ENCODE measurements at regions of chr7 and their contacts with region 1.

Region 1: DNA sequence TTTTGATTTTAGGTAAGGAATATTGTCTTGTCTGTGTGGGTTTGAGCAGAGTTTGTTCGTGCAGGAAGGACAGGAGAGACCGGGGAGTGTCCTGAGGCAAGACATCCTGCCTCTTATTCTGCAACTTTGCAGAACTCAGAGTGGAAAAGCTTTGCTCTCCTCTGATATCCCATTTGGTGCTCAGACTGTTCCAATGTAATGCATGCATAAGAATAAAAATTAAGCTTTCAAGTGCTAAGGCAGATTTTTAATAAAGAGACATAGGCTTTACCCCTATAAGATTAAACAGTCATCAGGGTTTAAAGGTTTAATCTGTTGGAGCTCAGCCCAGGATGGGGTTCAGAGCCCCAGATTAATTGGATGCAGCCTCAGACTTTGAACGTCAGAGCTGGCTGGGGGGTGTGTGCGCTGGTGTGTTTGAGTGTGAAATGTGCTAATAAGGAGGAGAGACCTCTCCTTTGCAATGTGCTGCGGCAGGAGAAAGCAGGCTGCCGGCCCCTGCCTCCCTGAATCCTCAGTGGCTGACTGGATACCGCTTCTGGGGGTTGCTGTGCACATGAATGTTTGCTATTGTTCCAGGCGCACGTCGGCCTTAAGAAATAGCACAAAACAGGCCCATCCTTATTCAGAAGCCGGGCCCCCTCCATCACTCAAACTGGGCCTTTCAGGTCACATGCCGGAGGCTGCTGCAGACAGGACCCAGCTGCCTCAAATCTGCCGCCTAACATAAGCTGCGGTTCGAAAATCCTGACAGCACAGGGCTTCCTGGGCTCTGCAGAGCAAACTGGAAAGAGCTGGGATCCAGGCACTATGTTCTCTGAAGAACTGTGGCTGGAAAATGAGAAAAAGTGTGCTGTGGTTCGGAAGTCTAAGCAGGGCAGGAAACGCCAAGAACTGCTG is 84.1 kb upstream of the PRR15 start:
- DNase-seq: peak; percentile 83
- H3K4me3 ChIP-seq: peak overlapping the region in 3 of 4 donors; percentile 23 to 45 (median 26)
- H3K27ac ChIP-seq: peak overlapping the region; percentile 72 to 91 (median 78)
- H3K4me1 ChIP-seq: peaks cover 0 to 53% (median 43%) of the 10 kb centered on the region in 4 donors
- H3K27me3 ChIP-seq: no peaks in the 10 kb centered on the region
- CTCF ChIP-seq: no peak
- EP300 ChIP-seq: no peak
- POLR2A ChIP-seq: no peak

Region 2: GRCh38 chr7:29564496-29565223 is 85.1 kb after region 1 on chr7:
- intact Hi-C with region 1: loop called (anchors 5 kb)
- DNase-seq: peak; percentile 73
- H3K4me3 ChIP-seq: peak overlapping the region; percentile 33 to 59 (median 50)
- H3K27ac ChIP-seq: peak overlapping the region; percentile 4 to 35 (median 32)
- H3K4me1 ChIP-seq: peaks cover 0 to 40% (median 35%) of the 10 kb centered on the region in 4 donors
- H3K27me3 ChIP-seq: peaks cover 5 to 68% (median 52%) of the 10 kb centered on the region in 3 donors
- CTCF ChIP-seq: no peak
- EP300 ChIP-seq: no peak
- POLR2A ChIP-seq: no peak

Region 3: DNA sequence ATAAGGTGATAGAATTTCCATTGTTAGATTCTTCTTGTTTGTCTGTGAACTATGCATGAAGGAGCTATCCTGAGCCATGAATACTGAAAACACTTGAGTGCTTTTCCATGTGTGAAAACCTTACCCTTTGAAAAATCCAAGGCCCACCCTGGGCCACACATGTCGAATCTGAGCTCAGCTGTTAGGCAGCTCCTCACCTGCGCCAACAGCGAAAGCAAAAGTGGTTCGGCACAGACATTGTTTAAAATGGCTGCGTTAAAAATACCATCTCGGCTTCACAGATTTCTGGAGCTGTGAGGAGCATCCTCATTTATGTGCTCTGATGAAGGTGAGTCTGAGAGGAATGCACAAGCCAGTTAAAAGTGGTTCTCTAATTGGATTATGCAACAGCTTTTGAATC is 1723.2 kb after region 1 on chr7:
- intact Hi-C with region 1: no loop called
- DNase-seq: no peak
- H3K4me3 ChIP-seq: no peak overlapping the region
- H3K27ac ChIP-seq: no peak overlapping the region
- H3K4me1 ChIP-seq: no peaks in the 10 kb centered on the region
- H3K27me3 ChIP-seq: no peaks in the 10 kb centered on the region
- CTCF ChIP-seq: no peak
- EP300 ChIP-seq: no peak
- POLR2A ChIP-seq: no peak